H1 (cell line): ENCODE measurements at regions of chr1 and their contacts with region 1.

Region 1: GRCh38 chr1:10209905-10210810 is at the start of gene KIF1B:
- DNase-seq: peak; percentile 95 to 99
- H3K4me3 ChIP-seq: peak within 1 kb of the TSS; percentile 79 to 95 (median 94)
- H3K27ac ChIP-seq: peak within 1 kb of the TSS; percentile 72
- H3K4me1 ChIP-seq: peaks cover 0 to 4% (median 2%) of the 10 kb centered on the region in 4 experiments; a peak in 4 of 7 replicates
- H3K27me3 ChIP-seq: no peaks in the 10 kb centered on the region
- CTCF ChIP-seq: peak; percentile 65 to 80 (median 79)
- EP300 ChIP-seq: 0 out of 3 replicates have a peak, but pooled peaks of 1 of the 2 experiments have one; percentile 48
- POLR2A ChIP-seq: peak; percentile 60 to 79
- RAD21 ChIP-seq: peak; percentile 43 to 58
- total RNA-seq, gene KIF1B: 73.9 and 74.2 TPM in 2 replicates

Region 2: DNA sequence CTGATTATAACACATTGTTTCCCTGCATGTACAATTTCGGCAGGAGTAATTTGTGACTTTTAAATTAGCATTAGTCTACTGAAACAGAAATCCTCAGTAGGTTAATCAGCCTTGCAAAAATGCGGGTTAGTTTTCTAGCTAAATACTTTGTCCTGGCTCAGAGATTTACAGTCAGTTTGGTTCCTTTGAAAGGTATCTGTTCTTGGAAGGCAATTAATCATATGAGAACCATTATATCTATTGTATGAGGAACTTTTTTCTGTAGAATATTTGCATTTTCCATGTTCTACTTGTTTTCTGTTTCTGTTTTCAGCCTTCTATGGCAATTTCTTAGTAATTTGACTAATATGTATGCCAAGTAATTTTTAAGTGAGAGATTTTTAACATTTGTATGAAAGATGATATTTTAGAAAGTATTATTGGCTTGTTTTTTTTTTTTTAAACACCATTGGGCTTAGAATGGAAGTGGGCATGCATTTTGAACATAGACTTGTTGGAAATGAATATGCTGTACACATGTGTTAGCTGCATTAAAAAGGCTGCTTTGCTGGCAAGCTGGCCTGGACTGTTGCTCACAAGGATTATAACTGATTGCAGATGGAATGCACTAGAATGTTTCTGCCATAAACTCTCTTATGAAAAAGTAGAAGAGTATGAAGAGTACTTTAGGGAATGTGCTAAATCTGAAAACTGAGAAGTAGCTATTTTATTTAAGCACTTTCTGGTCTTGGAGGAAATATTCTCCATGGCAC is 26.4 kb after region 1 on chr1:
- CTCF ChIA-PET with region 1: interaction called, 10 read pairs
- POLR2A ChIA-PET with region 1: no interaction called
- DNase-seq: no peak
- H3K4me3 ChIP-seq: no peak overlapping the region
- H3K27ac ChIP-seq: no peak overlapping the region
- H3K4me1 ChIP-seq: no peaks in the 10 kb centered on the region
- H3K27me3 ChIP-seq: no peaks in the 10 kb centered on the region
- CTCF ChIP-seq: no peak
- EP300 ChIP-seq: no peak
- POLR2A ChIP-seq: no peak
- RAD21 ChIP-seq: no peak

Region 3: DNA sequence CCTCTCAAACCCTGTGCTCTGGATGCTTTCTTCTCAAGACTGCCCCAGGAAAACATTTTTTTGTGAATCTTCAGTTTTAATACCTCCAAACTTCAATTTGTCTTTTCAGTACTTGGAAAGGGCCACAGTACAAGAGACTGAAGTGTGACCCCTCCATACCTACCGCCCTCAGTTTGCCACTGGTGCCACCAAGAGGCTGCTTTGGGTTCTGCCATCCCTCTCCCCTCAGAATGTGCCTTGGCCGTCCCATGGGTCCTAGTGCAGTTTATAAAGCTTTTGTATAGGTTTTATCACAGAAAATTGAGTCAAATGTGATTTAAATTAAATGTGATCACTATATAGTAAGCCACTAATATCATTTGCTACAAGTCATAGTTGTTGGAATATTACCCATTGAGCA is 127.9 kb after region 1 on chr1:
- CTCF ChIA-PET with region 1: interaction called, 11 read pairs
- POLR2A ChIA-PET with region 1: interaction called, 8 read pairs
- DNase-seq: peak; percentile 7 to 62
- H3K4me3 ChIP-seq: no peak overlapping the region
- H3K27ac ChIP-seq: no peak overlapping the region
- H3K4me1 ChIP-seq: peaks cover 0 to 7% (median 1%) of the 10 kb centered on the region in 4 experiments; a peak in 3 of 7 replicates
- H3K27me3 ChIP-seq: no peaks in the 10 kb centered on the region
- CTCF ChIP-seq: peak; percentile 74 to 91 (median 85)
- EP300 ChIP-seq: no peak
- POLR2A ChIP-seq: no peak
- RAD21 ChIP-seq: peak; percentile 89 to 91